ENCODE measurements at regions of chr16 and their contacts with region 1.

Region 1: GRCh38 chr16:71927383-71927782 is 32.1 kb downstream of the IST1 start:
- DNase-seq: peak in 1 of 2 donors; percentile 73
- ATAC-seq: peak; percentile 51
- H3K4me3 ChIP-seq: no peak overlapping the region
- H3K27ac ChIP-seq: peak overlapping the region in 1 of 2 donors; percentile 60
- H3K4me1 ChIP-seq: peaks cover 1 to 6% of the 10 kb centered on the region in 2 donors
- H3K27me3 ChIP-seq: no peaks in the 10 kb centered on the region

Region 2: GRCh38 chr16:71845639-71846430 is 81.5 kb before region 1 on chr16 and contains the start of gene ATXN1L:
- intact Hi-C with region 1: no loop called
- DNase-seq: peak; percentile 95 to 97
- ATAC-seq: peak; percentile 98
- H3K4me3 ChIP-seq: peak within 1 kb of the TSS; percentile 67 to 96
- H3K27ac ChIP-seq: peak within 1 kb of the TSS; percentile 9 to 49
- H3K4me1 ChIP-seq: no peaks in the 10 kb centered on the region
- H3K27me3 ChIP-seq: no peaks in the 10 kb centered on the region
- total RNA-seq, gene ATXN1L: 30.4 to 31.2 TPM

Region 3: DNA sequence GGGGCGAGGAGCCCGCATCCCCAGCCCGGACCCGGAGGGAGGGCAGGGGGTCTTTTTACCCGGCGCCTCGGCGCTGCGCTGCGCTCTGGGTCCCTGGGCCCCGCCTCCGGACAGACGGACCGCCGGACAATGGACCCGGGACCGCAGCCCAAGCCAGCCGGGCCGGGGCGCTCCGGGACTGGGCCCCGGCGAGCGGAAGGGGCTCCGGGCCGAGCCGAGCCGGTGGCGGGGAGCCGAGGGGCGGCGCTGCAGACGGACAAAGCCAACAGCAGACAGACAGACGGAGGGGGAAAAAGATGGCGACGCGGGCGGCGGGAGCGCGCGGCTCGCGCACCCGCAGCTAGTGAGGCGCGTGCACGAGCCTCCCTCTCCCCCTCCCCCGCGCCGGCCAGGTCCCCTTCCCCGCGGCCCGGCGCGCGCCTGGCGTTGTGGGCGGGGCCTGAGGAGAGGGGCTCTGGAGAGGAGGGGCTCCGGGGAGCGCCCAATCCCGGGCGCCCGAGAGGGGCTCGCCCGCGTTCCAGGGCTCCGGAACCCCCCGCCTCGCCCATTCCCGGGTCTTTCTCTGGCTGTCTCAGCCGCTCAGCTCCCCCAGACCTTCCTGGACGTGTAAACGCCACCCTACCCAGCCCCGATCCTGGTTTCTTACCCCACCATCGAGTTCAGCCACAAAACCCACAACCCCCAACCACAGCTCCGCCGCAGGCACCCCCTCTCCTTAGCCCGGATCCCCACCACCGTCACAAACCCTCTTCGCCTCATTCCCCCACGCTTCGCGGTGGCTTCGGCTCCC is 43.3 kb before region 1 on chr16 and contains the start of gene ZNF821:
- intact Hi-C with region 1: loop called in 1 of 2 experiments (anchors 5 kb)
- DNase-seq: peak; percentile 86 to 92
- ATAC-seq: peak; percentile 93
- H3K4me3 ChIP-seq: peak within 1 kb of the TSS; percentile 58 to 86
- H3K27ac ChIP-seq: peak within 1 kb of the TSS; percentile 83
- H3K4me1 ChIP-seq: no peaks in the 10 kb centered on the region
- H3K27me3 ChIP-seq: no peaks in the 10 kb centered on the region
- total RNA-seq, gene ZNF821: 7.9 to 9.9 TPM

Region 4: DNA sequence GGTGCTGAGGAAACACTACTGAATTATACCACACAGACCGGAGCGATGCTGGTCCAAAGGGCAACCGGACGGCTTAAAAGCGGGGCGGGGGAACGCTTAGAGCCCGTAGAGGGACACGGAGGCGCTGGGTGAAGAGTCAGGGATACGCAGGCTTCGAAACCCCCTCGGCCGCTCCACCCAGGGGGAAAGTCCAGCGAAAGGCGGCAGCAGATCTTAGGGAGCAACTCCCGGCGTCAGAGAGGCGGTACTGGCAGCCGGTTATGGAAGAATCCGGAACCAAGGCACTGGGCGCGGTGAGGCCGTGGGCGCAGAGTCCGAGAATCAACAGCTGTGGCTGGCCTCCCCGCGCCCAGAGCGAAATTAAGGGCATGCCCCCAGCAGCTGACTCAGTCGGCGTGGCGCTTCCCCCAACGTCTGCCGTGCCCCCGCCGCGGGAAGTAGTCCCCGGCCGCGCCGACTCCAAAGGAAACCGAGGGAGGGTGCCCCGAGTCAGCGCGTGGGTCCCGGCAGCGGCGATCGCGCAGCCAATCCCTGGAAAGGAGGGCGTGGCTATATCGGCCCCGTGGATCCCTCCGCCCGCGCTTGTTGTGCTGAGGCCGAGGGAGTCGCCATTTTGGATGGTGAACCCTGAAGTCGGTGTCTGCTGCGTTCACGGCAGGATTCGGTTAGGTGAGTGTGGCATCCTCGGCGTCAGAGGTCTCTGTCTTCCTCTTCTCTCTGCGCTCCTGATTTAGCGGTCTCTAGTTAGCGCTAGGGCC is 32.3 kb before region 1 on chr16 and contains the start of gene IST1:
- intact Hi-C with region 1: loop called in 1 of 2 experiments (anchors 2 kb)
- DNase-seq: peak; percentile 99
- ATAC-seq: peak; percentile 99
- H3K4me3 ChIP-seq: peak within 1 kb of the TSS; percentile 87 to 93
- H3K27ac ChIP-seq: peak within 1 kb of the TSS; percentile 72 to 99
- H3K4me1 ChIP-seq: peaks cover 0 to 2% of the 10 kb centered on the region in 2 donors
- H3K27me3 ChIP-seq: no peaks in the 10 kb centered on the region
- total RNA-seq, gene IST1: 152 to 202 TPM

Measured in aorta (tissue), 5 donors.